ENCODE measurements at regions of chr7 and their contacts with region 1.

Region 1: GRCh38 chr7:35985126-35985754 is 167.8 kb upstream of the EEPD1 start:
- DNase-seq: peak; percentile 59 to 84
- H3K4me3 ChIP-seq: no peak overlapping the region
- H3K4me1 ChIP-seq: no peaks in the 10 kb centered on the region
- H3K27me3 ChIP-seq: no peaks in the 10 kb centered on the region

Region 2: GRCh38 chr7:36291387-36292316 is 306.4 kb after region 1 on chr7:
- in situ Hi-C with region 1: loop called (anchors 5 kb)
- DNase-seq: peak; percentile 71 to 89
- H3K4me3 ChIP-seq: no peak overlapping the region
- H3K4me1 ChIP-seq: no peaks in the 10 kb centered on the region
- H3K27me3 ChIP-seq: no peaks in the 10 kb centered on the region

Region 3: GRCh38 chr7:36639826-36640225 is 654.6 kb after region 1 on chr7:
- in situ Hi-C with region 1: no loop called
- DNase-seq: no peak
- H3K4me3 ChIP-seq: no peak overlapping the region
- H3K4me1 ChIP-seq: peaks cover under 1% of the 10 kb centered on the region; the same call in 1 of the 2 replicates
- H3K27me3 ChIP-seq: no peaks in the 10 kb centered on the region